SK-N-SH (cell line): ENCODE measurements at regions of chr1 and their contacts with region 1.

Region 1: GRCh38 chr1:226121587-226122400 is 59.3 kb downstream of the H3-3A start:
- DNase-seq: peak; percentile 98
- H3K4me3 ChIP-seq: peak overlapping the region; percentile 64 to 73
- H3K27ac ChIP-seq: peak overlapping the region in 1 of 2 experiments; percentile 90; a peak in 2 of 4 replicates
- H3K4me1 ChIP-seq: peaks cover 0 to 15% of the 10 kb centered on the region in 2 experiments; a peak in 2 of 4 replicates
- H3K27me3 ChIP-seq: no peaks in the 10 kb centered on the region
- CTCF ChIP-seq: peak; percentile 63
- EP300 ChIP-seq: no peak; a peak in 1 of 4 replicates
- RAD21 ChIP-seq: peak; percentile 73

Region 2: GRCh38 chr1:226062558-226063223 is 59.1 kb before region 1 on chr1 and contains the start of gene H3-3A:
- CTCF ChIA-PET with region 1: interaction called, 104 read pairs
- POLR2A ChIA-PET with region 1: interaction called, 8 read pairs
- DNase-seq: peak; percentile 96
- H3K4me3 ChIP-seq: peak within 1 kb of the TSS; percentile 85 to 94
- H3K27ac ChIP-seq: peak within 1 kb of the TSS; percentile 99
- H3K4me1 ChIP-seq: peaks cover 23 to 33% of the 10 kb centered on the region in 2 experiments; a peak in 3 of 4 replicates
- H3K27me3 ChIP-seq: no peaks in the 10 kb centered on the region
- CTCF ChIP-seq: no peak
- EP300 ChIP-seq: peak in 1 of 2 experiments; percentile 26; a peak in 1 of 4 replicates
- RAD21 ChIP-seq: no peak
- polyA plus RNA-seq, gene H3-3A: 315 and 370 TPM in 2 replicates

Region 3: GRCh38 chr1:226109829-226110248 is 12.0 kb before region 1 on chr1:
- CTCF ChIA-PET with region 1: interaction called, 38 read pairs
- POLR2A ChIA-PET with region 1: interaction called, 7 read pairs
- DNase-seq: peak; percentile 99
- H3K4me3 ChIP-seq: peak overlapping the region; percentile 58 to 71
- H3K27ac ChIP-seq: peak overlapping the region; percentile 84 to 95
- H3K4me1 ChIP-seq: peaks cover 15 to 19% of the 10 kb centered on the region in 2 experiments; a peak in 3 of 4 replicates
- H3K27me3 ChIP-seq: no peaks in the 10 kb centered on the region
- CTCF ChIP-seq: no peak
- EP300 ChIP-seq: no peak
- RAD21 ChIP-seq: peak; percentile 24; the same call in 1 of the 2 replicates

Region 4: GRCh38 chr1:226166341-226166740 is 44.5 kb after region 1 on chr1:
- CTCF ChIA-PET with region 1: interaction called, 14 read pairs
- POLR2A ChIA-PET with region 1: no interaction called
- DNase-seq: no peak
- H3K4me3 ChIP-seq: no peak overlapping the region
- H3K27ac ChIP-seq: no peak overlapping the region
- H3K4me1 ChIP-seq: no peaks in the 10 kb centered on the region
- H3K27me3 ChIP-seq: no peaks in the 10 kb centered on the region
- CTCF ChIP-seq: no peak
- EP300 ChIP-seq: no peak
- RAD21 ChIP-seq: no peak

Region 5: DNA sequence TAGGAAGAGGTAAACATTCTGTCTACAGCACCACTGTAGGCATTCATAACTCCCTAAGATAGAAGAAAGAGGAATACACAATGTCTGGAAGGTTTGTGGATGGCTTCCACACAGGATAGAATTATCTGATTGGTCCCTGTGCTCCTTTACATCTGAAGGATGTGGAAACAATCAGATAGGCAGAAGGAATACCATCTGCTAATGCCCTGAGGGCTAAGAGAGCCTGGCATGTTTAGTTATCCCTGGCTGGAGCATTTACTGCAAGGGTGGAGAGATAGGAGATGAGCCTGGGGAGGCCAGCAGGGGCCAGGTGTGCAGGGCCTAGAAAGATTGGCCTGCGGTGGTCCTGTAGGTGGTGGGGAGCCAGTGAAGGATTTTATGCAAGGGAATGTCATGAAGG is 73.3 kb after region 1 on chr1:
- CTCF ChIA-PET with region 1: interaction called, 126 read pairs
- POLR2A ChIA-PET with region 1: no interaction called
- DNase-seq: peak; percentile 42
- H3K4me3 ChIP-seq: no peak overlapping the region
- H3K27ac ChIP-seq: no peak overlapping the region
- H3K4me1 ChIP-seq: peaks cover 0 to 4% of the 10 kb centered on the region in 2 experiments; a peak in 1 of 4 replicates
- H3K27me3 ChIP-seq: no peaks in the 10 kb centered on the region; the same call in 1 of the 2 replicates
- CTCF ChIP-seq: no peak
- EP300 ChIP-seq: no peak
- RAD21 ChIP-seq: no peak

Region 6: GRCh38 chr1:226332947-226333346 is 211.2 kb after region 1 on chr1:
- CTCF ChIA-PET with region 1: interaction called, 75 read pairs
- POLR2A ChIA-PET with region 1: no interaction called
- DNase-seq: peak; percentile 35
- H3K4me3 ChIP-seq: peak overlapping the region in 1 of 2 experiments; percentile 29; a peak in 2 of 4 replicates
- H3K27ac ChIP-seq: peak overlapping the region in 1 of 2 experiments; percentile 31; a peak in 1 of 4 replicates
- H3K4me1 ChIP-seq: peaks cover 0 to 2% of the 10 kb centered on the region in 2 experiments; a peak in 2 of 4 replicates
- H3K27me3 ChIP-seq: no peaks in the 10 kb centered on the region
- CTCF ChIP-seq: no peak
- EP300 ChIP-seq: 0 out of 4 replicates have a peak, but pooled peaks of 1 of the 2 experiments have one; percentile 8
- RAD21 ChIP-seq: no peak